CD4-positive, alpha-beta T cell (primary cell): ENCODE measurements at regions of chr10 and their contacts with region 1.

Region 1: DNA sequence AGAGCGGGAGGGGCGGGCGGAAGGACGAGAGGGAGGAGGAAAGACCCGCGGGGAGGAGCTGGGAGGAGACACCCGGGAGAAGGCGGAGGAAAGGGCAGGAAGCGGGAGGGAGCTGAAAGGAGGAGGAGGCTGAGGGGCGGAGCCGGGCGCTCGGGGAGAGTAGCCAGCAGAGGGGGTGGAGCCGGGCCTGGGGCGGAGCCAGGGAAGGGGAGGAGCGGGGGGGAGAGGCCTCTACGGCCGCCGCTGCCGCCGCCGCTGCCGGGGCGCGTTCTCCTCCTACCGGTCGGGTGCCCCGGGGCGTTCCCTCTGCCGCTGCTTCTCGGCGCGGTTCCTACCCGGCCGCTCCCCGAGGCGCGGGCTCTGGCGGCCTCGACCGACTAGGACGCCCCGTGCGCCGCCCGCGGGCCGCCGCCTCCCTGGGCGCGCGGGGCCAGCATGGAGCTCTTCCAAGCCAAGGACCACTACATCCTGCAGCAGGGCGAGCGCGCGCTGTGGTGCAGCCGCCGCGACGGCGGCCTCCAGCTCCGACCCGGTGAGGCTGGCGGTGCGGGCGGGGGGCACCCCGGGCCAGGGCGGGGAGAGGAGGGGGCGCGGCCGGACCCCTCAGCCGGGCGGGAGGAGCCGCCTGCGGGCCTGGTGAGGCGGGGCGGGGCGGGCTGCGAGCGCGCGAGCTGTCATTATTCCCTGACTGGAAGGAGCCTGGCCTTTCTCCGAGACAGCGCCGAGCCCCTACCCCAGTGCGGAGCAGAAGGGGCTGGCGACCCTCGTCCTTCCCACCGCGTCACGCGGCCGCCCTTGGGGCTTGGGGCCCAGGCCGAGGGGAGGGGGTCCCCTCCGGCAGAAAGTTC is at the start of gene INPP5F:
- DNase-seq: peak; percentile 96 to 100 (median 99)
- ATAC-seq: peak; percentile 91
- H3K4me3 ChIP-seq: peak within 1 kb of the TSS; percentile 79
- H3K4me3 Mint-ChIP-seq: peak within 1 kb of the TSS; percentile 88
- H3K27ac ChIP-seq: peak within 1 kb of the TSS; percentile 53 to 59
- H3K27ac Mint-ChIP-seq: peak within 1 kb of the TSS; percentile 77
- H3K4me1 ChIP-seq: peaks cover 22% of the 10 kb centered on the region
- H3K4me1 Mint-ChIP-seq: peaks cover 30% of the 10 kb centered on the region
- H3K27me3 ChIP-seq: no peaks in the 10 kb centered on the region
- H3K27me3 Mint-ChIP-seq: no peaks in the 10 kb centered on the region
- CTCF ChIP-seq: peak; percentile 17
- total RNA-seq, gene INPP5F: 6.2 to 6.4 TPM

Region 2: DNA sequence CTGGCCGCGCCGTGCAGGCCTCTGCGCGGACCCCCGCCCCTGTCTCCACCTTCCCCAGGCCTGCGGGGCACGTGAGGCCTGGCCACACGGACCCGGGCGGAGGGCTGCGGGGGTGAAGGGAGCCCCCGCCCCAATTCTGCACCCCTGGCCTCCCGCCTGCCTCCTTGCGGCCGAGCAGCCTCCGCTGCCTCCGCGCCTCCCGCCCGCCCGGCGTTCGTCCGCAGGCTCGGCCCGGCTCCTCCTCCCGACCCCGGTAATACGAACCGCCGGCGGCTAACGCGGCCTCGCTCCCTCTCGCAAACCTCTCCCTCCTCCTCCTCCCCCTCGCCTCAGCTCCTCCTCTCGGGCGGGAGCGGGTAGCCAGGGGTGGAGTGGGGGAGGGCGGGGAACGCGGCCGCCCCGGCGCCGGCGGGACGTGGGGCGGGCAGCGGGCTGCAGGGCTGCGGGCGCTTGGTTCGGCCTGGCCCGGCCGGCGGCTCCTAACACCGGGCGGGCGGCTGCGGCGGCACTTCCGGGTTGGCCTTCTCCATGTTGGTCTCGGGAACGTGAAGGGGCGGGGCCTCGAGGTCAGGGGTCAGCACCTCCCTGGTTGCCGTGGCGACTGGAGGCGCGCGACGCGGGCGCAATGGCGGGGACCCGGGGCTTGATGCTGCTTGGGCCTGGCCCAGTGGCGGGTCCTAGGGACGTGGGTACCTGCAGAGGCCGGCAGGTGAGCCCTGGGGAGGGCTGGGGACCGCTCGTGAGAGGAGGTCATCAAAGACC is 1679.5 kb before region 1 on chr10 and contains the start of gene RAB11FIP2:
- CTCF ChIA-PET with region 1: no interaction called
- POLR2A ChIA-PET with region 1: no interaction called
- intact Hi-C with region 1: loop called in 1 of 2 experiments (anchors 10 kb)
- DNase-seq: peak; percentile 91 to 98 (median 95)
- ATAC-seq: peak; percentile 93
- H3K4me3 ChIP-seq: peak within 1 kb of the TSS; percentile 79
- H3K4me3 Mint-ChIP-seq: peak within 1 kb of the TSS; percentile 94
- H3K27ac ChIP-seq: peak within 1 kb of the TSS in 1 of 2 donors; percentile 60
- H3K27ac Mint-ChIP-seq: peak within 1 kb of the TSS; percentile 79
- H3K4me1 ChIP-seq: peaks cover 13% of the 10 kb centered on the region
- H3K4me1 Mint-ChIP-seq: peaks cover 51% of the 10 kb centered on the region
- H3K27me3 ChIP-seq: no peaks in the 10 kb centered on the region
- H3K27me3 Mint-ChIP-seq: no peaks in the 10 kb centered on the region
- CTCF ChIP-seq: no peak
- total RNA-seq, gene RAB11FIP2: 35.6 to 37.7 TPM

Region 3: GRCh38 chr10:119103903-119104652 is 622.0 kb before region 1 on chr10 and contains the start of gene DENND10:
- CTCF ChIA-PET with region 1: no interaction called
- POLR2A ChIA-PET with region 1: interaction called, 4 read pairs
- intact Hi-C with region 1: loop called in 1 of 2 experiments (anchors 10 kb)
- DNase-seq: peak; percentile 51 to 90 (median 71)
- ATAC-seq: peak; percentile 77
- H3K4me3 ChIP-seq: peak within 1 kb of the TSS; percentile 66
- H3K4me3 Mint-ChIP-seq: peak within 1 kb of the TSS; percentile 95
- H3K27ac ChIP-seq: peak within 1 kb of the TSS in 1 of 2 donors; percentile 40
- H3K27ac Mint-ChIP-seq: peak within 1 kb of the TSS; percentile 94
- H3K4me1 ChIP-seq: peaks cover 26% of the 10 kb centered on the region
- H3K4me1 Mint-ChIP-seq: peaks cover 13% of the 10 kb centered on the region
- H3K27me3 ChIP-seq: no peaks in the 10 kb centered on the region
- H3K27me3 Mint-ChIP-seq: no peaks in the 10 kb centered on the region
- CTCF ChIP-seq: no peak
- total RNA-seq, gene DENND10: 40.4 to 45.6 TPM

Region 4: GRCh38 chr10:119596537-119597404 is 129.3 kb before region 1 on chr10 and contains the start of gene TIAL1:
- CTCF ChIA-PET with region 1: interaction called, 3 read pairs
- POLR2A ChIA-PET with region 1: interaction called, 3 read pairs
- intact Hi-C with region 1: loop called (anchors 2 to 10 kb)
- DNase-seq: peak; percentile 82 to 97 (median 90)
- ATAC-seq: peak; percentile 82
- H3K4me3 ChIP-seq: peak within 1 kb of the TSS; percentile 70
- H3K4me3 Mint-ChIP-seq: peak within 1 kb of the TSS; percentile 98
- H3K27ac ChIP-seq: peak within 1 kb of the TSS; percentile 87 to 96
- H3K27ac Mint-ChIP-seq: peak within 1 kb of the TSS; percentile 95
- H3K4me1 ChIP-seq: peaks cover 22% of the 10 kb centered on the region
- H3K4me1 Mint-ChIP-seq: peaks cover 60% of the 10 kb centered on the region
- H3K27me3 ChIP-seq: no peaks in the 10 kb centered on the region
- H3K27me3 Mint-ChIP-seq: no peaks in the 10 kb centered on the region
- CTCF ChIP-seq: no peak
- total RNA-seq, gene TIAL1: 159 to 174 TPM

Region 5: GRCh38 chr10:119663866-119664616 is 62.0 kb before region 1 on chr10:
- CTCF ChIA-PET with region 1: no interaction called
- POLR2A ChIA-PET with region 1: interaction called, 11 read pairs
- intact Hi-C with region 1: no loop called
- DNase-seq: peak in 13 of 14 experiments; percentile 18 to 83 (median 29)
- ATAC-seq: peak; percentile 94
- H3K4me3 ChIP-seq: peak overlapping the region; percentile 36
- H3K4me3 Mint-ChIP-seq: peak overlapping the region; percentile 77
- H3K27ac ChIP-seq: peak overlapping the region; percentile 21 to 69
- H3K27ac Mint-ChIP-seq: peak overlapping the region; percentile 91
- H3K4me1 ChIP-seq: peaks cover 76% of the 10 kb centered on the region
- H3K4me1 Mint-ChIP-seq: peaks cover 76% of the 10 kb centered on the region
- H3K27me3 ChIP-seq: no peaks in the 10 kb centered on the region
- H3K27me3 Mint-ChIP-seq: no peaks in the 10 kb centered on the region
- CTCF ChIP-seq: no peak

Region 6: GRCh38 chr10:119705434-119705831 is 20.6 kb before region 1 on chr10:
- CTCF ChIA-PET with region 1: interaction called, 3 read pairs
- POLR2A ChIA-PET with region 1: interaction called, 26 read pairs
- intact Hi-C with region 1: no loop called
- DNase-seq: peak in 1 of 14 experiments; percentile 23
- ATAC-seq: no peak
- H3K4me3 ChIP-seq: no peak overlapping the region
- H3K4me3 Mint-ChIP-seq: no peak overlapping the region
- H3K27ac ChIP-seq: no peak overlapping the region
- H3K27ac Mint-ChIP-seq: peak overlapping the region; percentile 51
- H3K4me1 ChIP-seq: peaks cover 9% of the 10 kb centered on the region
- H3K4me1 Mint-ChIP-seq: peaks cover 17% of the 10 kb centered on the region
- H3K27me3 ChIP-seq: no peaks in the 10 kb centered on the region
- H3K27me3 Mint-ChIP-seq: no peaks in the 10 kb centered on the region
- CTCF ChIP-seq: no peak

Region 7: GRCh38 chr10:119750391-119751230 is 24.6 kb after region 1 on chr10:
- CTCF ChIA-PET with region 1: interaction called, 15 read pairs
- POLR2A ChIA-PET with region 1: interaction called, 5 read pairs
- intact Hi-C with region 1: no loop called
- DNase-seq: peak; percentile 30 to 77 (median 44)
- ATAC-seq: peak; percentile 99
- H3K4me3 ChIP-seq: no peak overlapping the region
- H3K4me3 Mint-ChIP-seq: no peak overlapping the region
- H3K27ac ChIP-seq: no peak overlapping the region
- H3K27ac Mint-ChIP-seq: no peak overlapping the region
- H3K4me1 ChIP-seq: no peaks in the 10 kb centered on the region
- H3K4me1 Mint-ChIP-seq: peaks cover 14% of the 10 kb centered on the region
- H3K27me3 ChIP-seq: no peaks in the 10 kb centered on the region
- H3K27me3 Mint-ChIP-seq: no peaks in the 10 kb centered on the region
- CTCF ChIP-seq: peak; percentile 85

Region 8: GRCh38 chr10:119769886-119770285 is 43.8 kb after region 1 on chr10:
- CTCF ChIA-PET with region 1: no interaction called
- POLR2A ChIA-PET with region 1: no interaction called
- intact Hi-C with region 1: no loop called
- DNase-seq: no peak
- ATAC-seq: no peak
- H3K4me3 ChIP-seq: no peak overlapping the region
- H3K4me3 Mint-ChIP-seq: no peak overlapping the region
- H3K27ac ChIP-seq: no peak overlapping the region
- H3K27ac Mint-ChIP-seq: no peak overlapping the region
- H3K4me1 ChIP-seq: no peaks in the 10 kb centered on the region
- H3K4me1 Mint-ChIP-seq: peaks cover 29% of the 10 kb centered on the region
- H3K27me3 ChIP-seq: no peaks in the 10 kb centered on the region
- H3K27me3 Mint-ChIP-seq: no peaks in the 10 kb centered on the region
- CTCF ChIP-seq: no peak